Activated B cell treated with CpG ODN at 0.5 μM for 24 hours (primary cell): ENCODE measurements at regions of chr1 and their contacts with region 1.

Region 1: DNA sequence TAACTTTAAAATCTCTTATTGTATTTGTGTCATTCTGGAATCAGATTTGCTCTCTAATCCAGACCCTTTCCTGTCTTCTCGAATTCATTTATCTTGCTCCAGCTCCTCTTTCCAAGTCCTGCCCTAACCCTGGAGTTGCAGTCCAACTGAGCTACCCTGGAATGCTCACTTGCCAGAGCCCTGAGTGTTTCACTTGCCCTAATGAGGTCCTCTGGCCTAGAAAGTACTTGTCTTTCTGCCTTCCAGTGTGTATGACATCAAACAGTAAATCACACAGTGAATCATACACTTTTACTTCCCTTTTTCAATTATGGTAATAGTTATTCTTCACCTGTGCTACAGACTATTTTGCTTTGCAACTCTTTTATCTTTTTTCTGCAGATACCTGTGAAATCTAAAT is 96.9 kb downstream of the NEK7 start:
- DNase-seq: no peak
- ATAC-seq: peak; percentile 94
- H3K4me3 Mint-ChIP-seq: peak overlapping the region; percentile 59
- H3K27ac Mint-ChIP-seq: peak overlapping the region; percentile 79
- H3K4me1 Mint-ChIP-seq: peaks cover 24% of the 10 kb centered on the region
- H3K27me3 Mint-ChIP-seq: no peaks in the 10 kb centered on the region
- CTCF ChIP-seq: no peak

Region 2: GRCh38 chr1:198175423-198176170 is 78.1 kb before region 1 on chr1:
- CTCF ChIA-PET with region 1: no interaction called
- POLR2A ChIA-PET with region 1: interaction called, 3 read pairs
- intact Hi-C with region 1: loop called (anchors 5 kb)
- DNase-seq: no peak
- ATAC-seq: peak; percentile 74
- H3K4me3 Mint-ChIP-seq: peak overlapping the region; percentile 53
- H3K27ac Mint-ChIP-seq: peak overlapping the region; percentile 74
- H3K4me1 Mint-ChIP-seq: peaks cover 83% of the 10 kb centered on the region
- H3K27me3 Mint-ChIP-seq: no peaks in the 10 kb centered on the region
- CTCF ChIP-seq: no peak

Region 3: DNA sequence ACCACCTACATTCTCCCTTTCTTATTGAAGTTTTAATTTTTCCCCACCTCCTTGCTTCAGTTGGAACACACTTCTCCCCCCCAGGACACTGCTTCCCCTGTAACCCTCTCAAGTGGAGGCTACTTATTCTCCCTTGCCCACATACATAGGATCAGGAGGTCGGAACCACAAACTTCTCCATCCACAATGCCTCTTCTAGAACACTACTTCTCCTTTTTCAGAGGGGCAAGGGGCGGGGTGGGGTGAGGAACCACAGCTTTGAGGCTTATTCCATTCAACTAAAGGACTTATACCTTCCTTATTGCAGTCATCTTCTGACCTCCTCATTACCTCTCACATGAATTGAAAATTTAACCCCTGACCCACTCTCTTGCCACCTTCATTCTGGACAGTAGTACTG is 15.5 kb before region 1 on chr1:
- CTCF ChIA-PET with region 1: no interaction called
- POLR2A ChIA-PET with region 1: no interaction called
- intact Hi-C with region 1: loop called (anchors 2 kb)
- DNase-seq: no peak
- ATAC-seq: peak; percentile 78
- H3K4me3 Mint-ChIP-seq: no peak overlapping the region
- H3K27ac Mint-ChIP-seq: no peak overlapping the region
- H3K4me1 Mint-ChIP-seq: peaks cover 25% of the 10 kb centered on the region
- H3K27me3 Mint-ChIP-seq: no peaks in the 10 kb centered on the region
- CTCF ChIP-seq: no peak

Region 4: GRCh38 chr1:198363625-198364151 is 110.0 kb after region 1 on chr1:
- CTCF ChIA-PET with region 1: no interaction called
- POLR2A ChIA-PET with region 1: no interaction called
- intact Hi-C with region 1: no loop called
- DNase-seq: no peak
- ATAC-seq: no peak
- H3K4me3 Mint-ChIP-seq: no peak overlapping the region
- H3K27ac Mint-ChIP-seq: no peak overlapping the region
- H3K4me1 Mint-ChIP-seq: no peaks in the 10 kb centered on the region
- H3K27me3 Mint-ChIP-seq: peaks cover 6% of the 10 kb centered on the region
- CTCF ChIP-seq: no peak